Activated CD4-positive, alpha-beta T cell treated with anti-CD3 and anti-CD28 coated beads, Interleukin-2, amount 10 ng/mL, durations not matched to agents 24 days and 14 days (primary cell): ENCODE measurements at regions of chr12 and their contacts with region 1.

Region 1: DNA sequence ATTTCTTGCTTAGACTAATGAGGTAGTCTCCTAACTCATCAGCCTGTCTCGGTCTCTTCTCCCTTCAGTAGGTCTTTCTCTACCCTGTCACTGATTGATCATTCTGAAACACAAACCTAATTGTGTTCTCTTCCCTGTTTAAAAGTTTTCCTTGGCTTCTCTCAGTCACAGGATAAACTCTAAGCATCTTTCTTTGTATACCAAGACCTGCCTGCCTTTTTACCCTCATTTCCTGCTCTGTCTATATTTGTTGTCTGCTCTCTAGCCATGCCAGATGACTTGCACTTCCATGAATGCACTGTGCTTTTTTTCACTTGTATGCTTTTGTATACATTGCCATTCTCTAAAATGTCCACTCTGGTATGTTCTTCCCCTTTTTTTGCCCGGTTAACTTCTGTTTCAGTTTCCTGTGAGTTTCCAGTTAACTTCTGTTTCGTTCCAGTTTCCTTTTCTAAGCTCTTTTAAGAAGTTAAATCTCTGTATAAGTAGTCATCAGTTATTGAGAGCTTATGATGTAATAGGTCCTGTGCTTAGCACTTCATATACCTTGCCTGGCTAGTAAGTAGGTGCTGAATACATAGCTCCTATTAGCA is 12.8 kb downstream of the DIP2B start:
- DNase-seq: peak; percentile 76
- H3K4me3 Mint-ChIP-seq: no peak overlapping the region
- H3K27ac Mint-ChIP-seq: no peak overlapping the region
- H3K4me1 Mint-ChIP-seq: peaks cover 48% of the 10 kb centered on the region
- H3K27me3 Mint-ChIP-seq: no peaks in the 10 kb centered on the region

Region 2: DNA sequence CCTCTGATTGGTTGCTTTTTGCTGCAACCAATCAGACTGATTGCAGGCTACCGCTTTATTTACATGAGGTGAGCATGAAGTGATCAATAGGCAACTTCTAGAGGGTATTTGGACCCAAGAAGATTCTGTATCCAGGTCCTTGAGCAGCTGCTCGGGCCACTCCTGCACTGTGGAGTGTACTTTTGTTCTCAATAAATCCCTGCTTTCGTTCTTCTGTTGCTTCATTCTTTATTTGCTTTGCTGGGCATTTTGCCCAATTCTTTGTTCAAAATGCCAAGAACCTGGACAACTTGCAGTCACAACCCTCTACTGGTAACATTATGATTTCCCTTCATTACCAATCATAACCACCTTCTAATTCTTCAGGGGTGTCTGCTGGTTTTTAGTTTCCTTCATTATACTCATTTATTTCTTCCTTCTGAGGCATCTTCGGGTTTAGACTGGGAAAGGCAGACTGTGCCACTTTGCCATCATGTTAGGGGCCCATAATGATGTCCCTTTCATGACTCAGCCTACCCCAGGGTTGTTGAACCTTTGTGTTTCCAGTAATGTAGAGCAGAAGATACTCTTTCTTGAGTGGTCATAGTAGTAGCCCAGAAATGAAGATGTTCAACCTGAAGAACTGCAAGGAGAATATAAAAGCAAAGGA is 190.8 kb before region 1 on chr12:
- intact Hi-C with region 1: no loop called
- DNase-seq: no peak
- H3K4me3 Mint-ChIP-seq: no peak overlapping the region
- H3K27ac Mint-ChIP-seq: no peak overlapping the region
- H3K4me1 Mint-ChIP-seq: no peaks in the 10 kb centered on the region
- H3K27me3 Mint-ChIP-seq: no peaks in the 10 kb centered on the region

Region 3: GRCh38 chr12:50542448-50542847 is 24.9 kb after region 1 on chr12:
- intact Hi-C with region 1: loop called (anchors 1 kb)
- DNase-seq: peak; percentile 65
- H3K4me3 Mint-ChIP-seq: no peak overlapping the region
- H3K27ac Mint-ChIP-seq: peak overlapping the region; percentile 91
- H3K4me1 Mint-ChIP-seq: peaks cover 29% of the 10 kb centered on the region
- H3K27me3 Mint-ChIP-seq: no peaks in the 10 kb centered on the region